Lower leg skin (tissue), 4 donors: ENCODE measurements at regions of chr14 and their contacts with region 1.

Region 1: GRCh38 chr14:85276979-85277228 is 253.0 kb upstream of the FLRT2 start:
- DNase-seq: no peak
- H3K4me3 ChIP-seq: no peak overlapping the region
- CTCF ChIP-seq: no peak
- POLR2A ChIP-seq: no peak

Region 2: GRCh38 chr14:85172290-85172689 is 104.6 kb before region 1 on chr14:
- intact Hi-C with region 1: no loop called
- DNase-seq: no peak
- H3K4me3 ChIP-seq: no peak overlapping the region
- CTCF ChIP-seq: no peak
- POLR2A ChIP-seq: no peak

Region 3: GRCh38 chr14:86990396-86990795 is 1713.5 kb after region 1 on chr14:
- intact Hi-C with region 1: loop called (anchors 5 kb)
- DNase-seq: no peak
- H3K4me3 ChIP-seq: no peak overlapping the region
- CTCF ChIP-seq: no peak
- POLR2A ChIP-seq: no peak